ENCODE measurements at regions of chr5 and their contacts with region 1.

Region 1: GRCh38 chr5:74919487-74919886 is 53.3 kb upstream of the FAM169A start:
- DNase-seq: peak in 1 of 2 donors; percentile 71
- ATAC-seq: peak; percentile 69 to 90 (median 85)
- H3K4me3 ChIP-seq: no peak overlapping the region
- H3K4me3 Mint-ChIP-seq: no peak overlapping the region
- H3K27ac ChIP-seq: no peak overlapping the region
- H3K27ac Mint-ChIP-seq: no peak overlapping the region
- H3K4me1 ChIP-seq: no peaks in the 10 kb centered on the region
- H3K4me1 Mint-ChIP-seq: peaks cover 0 to 12% of the 10 kb centered on the region in 2 donors
- H3K27me3 ChIP-seq: no peaks in the 10 kb centered on the region
- H3K27me3 Mint-ChIP-seq: no peaks in the 10 kb centered on the region
- CTCF ChIP-seq: peak; percentile 83

Region 2: GRCh38 chr5:73902327-73903051 is 1017.0 kb before region 1 on chr5:
- intact Hi-C with region 1: loop called (anchors 10 kb)
- DNase-seq: peak in 1 of 2 donors; percentile 74
- ATAC-seq: peak in 2 of 3 donors; percentile 53 to 57
- H3K4me3 ChIP-seq: no peak overlapping the region
- H3K4me3 Mint-ChIP-seq: no peak overlapping the region
- H3K27ac ChIP-seq: no peak overlapping the region
- H3K27ac Mint-ChIP-seq: no peak overlapping the region
- H3K4me1 ChIP-seq: no peaks in the 10 kb centered on the region
- H3K4me1 Mint-ChIP-seq: no peaks in the 10 kb centered on the region
- H3K27me3 ChIP-seq: no peaks in the 10 kb centered on the region
- H3K27me3 Mint-ChIP-seq: peaks cover 0 to 3% of the 10 kb centered on the region in 2 donors
- CTCF ChIP-seq: peak; percentile 90

Region 3: DNA sequence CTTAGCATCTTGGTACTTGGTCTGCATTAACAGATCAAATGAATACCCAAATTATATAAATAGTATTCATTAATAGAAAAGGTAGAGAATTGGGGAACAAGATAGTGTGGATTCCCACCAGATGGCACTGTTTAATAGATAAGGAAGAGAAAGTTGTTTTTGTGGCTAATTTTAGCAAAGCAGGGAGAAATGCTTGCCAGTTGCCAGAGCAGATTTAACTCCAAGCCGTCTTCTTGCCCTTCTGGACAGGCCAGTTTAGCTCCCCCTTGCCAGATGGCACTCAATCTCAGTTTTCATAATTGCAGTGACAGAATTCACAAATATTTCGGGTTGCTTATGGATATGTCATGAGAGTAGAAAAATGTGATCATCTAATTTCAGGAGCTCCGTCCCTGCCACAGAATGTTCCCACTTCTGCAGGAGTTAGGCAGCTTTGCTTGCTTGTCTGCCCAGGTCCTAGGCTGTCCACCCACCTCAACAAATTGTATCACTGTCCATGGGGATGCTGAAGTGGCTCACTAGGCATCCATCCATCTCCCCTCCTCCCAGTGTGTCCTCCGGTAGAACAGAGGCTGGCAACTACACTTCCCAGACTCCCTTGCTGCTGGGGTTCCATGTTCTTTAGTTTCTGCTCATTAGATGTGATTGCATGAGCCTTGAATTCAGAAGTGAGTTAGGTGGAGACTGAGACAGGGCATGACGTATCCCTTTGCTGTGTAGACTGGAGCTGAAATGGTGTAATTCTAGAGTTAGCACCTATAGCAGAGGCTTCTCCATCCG is 246.3 kb before region 1 on chr5:
- intact Hi-C with region 1: loop called (anchors 5 kb)
- DNase-seq: peak in 1 of 2 donors; percentile 47
- ATAC-seq: no peak
- H3K4me3 ChIP-seq: no peak overlapping the region
- H3K4me3 Mint-ChIP-seq: no peak overlapping the region
- H3K27ac ChIP-seq: no peak overlapping the region
- H3K27ac Mint-ChIP-seq: no peak overlapping the region
- H3K4me1 ChIP-seq: no peaks in the 10 kb centered on the region
- H3K4me1 Mint-ChIP-seq: no peaks in the 10 kb centered on the region
- H3K27me3 ChIP-seq: no peaks in the 10 kb centered on the region
- H3K27me3 Mint-ChIP-seq: peaks cover 13 to 20% of the 10 kb centered on the region in 2 donors
- CTCF ChIP-seq: peak; percentile 26

Region 4: GRCh38 chr5:74877624-74878304 is 41.7 kb before region 1 on chr5:
- intact Hi-C with region 1: no loop called
- DNase-seq: no peak
- ATAC-seq: no peak
- H3K4me3 ChIP-seq: no peak overlapping the region
- H3K4me3 Mint-ChIP-seq: no peak overlapping the region
- H3K27ac ChIP-seq: no peak overlapping the region
- H3K27ac Mint-ChIP-seq: no peak overlapping the region
- H3K4me1 ChIP-seq: no peaks in the 10 kb centered on the region
- H3K4me1 Mint-ChIP-seq: no peaks in the 10 kb centered on the region
- H3K27me3 ChIP-seq: no peaks in the 10 kb centered on the region
- H3K27me3 Mint-ChIP-seq: peaks cover 0 to 2% of the 10 kb centered on the region in 2 donors
- CTCF ChIP-seq: no peak

Region 5: GRCh38 chr5:74966151-74967026 is 46.9 kb after region 1 on chr5:
- intact Hi-C with region 1: no loop called
- DNase-seq: no peak
- ATAC-seq: no peak
- H3K4me3 ChIP-seq: no peak overlapping the region
- H3K4me3 Mint-ChIP-seq: no peak overlapping the region
- H3K27ac ChIP-seq: no peak overlapping the region
- H3K27ac Mint-ChIP-seq: no peak overlapping the region
- H3K4me1 ChIP-seq: no peaks in the 10 kb centered on the region
- H3K4me1 Mint-ChIP-seq: no peaks in the 10 kb centered on the region
- H3K27me3 ChIP-seq: peaks cover 2% of the 10 kb centered on the region
- H3K27me3 Mint-ChIP-seq: peaks cover 18 to 36% of the 10 kb centered on the region in 2 donors
- CTCF ChIP-seq: no peak

Region 6: DNA sequence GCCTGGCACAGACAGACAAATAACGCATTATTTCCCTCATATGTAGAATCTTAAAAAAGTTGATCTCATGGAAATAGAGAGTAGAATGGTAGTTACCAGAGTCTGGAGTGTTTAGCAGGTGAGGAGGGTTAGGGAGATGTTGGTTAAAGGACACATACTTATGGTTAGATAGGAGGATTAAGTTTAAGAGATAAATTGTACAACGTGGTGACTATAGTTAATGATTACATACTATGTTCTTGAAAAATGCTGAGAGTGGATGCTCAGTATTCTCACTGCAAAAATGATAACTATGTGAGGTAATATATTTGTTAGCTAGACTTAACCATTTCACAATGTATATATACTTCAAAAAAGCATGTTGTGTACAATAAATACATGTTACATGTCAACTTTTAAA is 554.0 kb after region 1 on chr5:
- intact Hi-C with region 1: no loop called
- DNase-seq: no peak
- ATAC-seq: no peak
- H3K4me3 ChIP-seq: no peak overlapping the region
- H3K4me3 Mint-ChIP-seq: no peak overlapping the region
- H3K27ac ChIP-seq: no peak overlapping the region
- H3K27ac Mint-ChIP-seq: no peak overlapping the region
- H3K4me1 ChIP-seq: no peaks in the 10 kb centered on the region
- H3K4me1 Mint-ChIP-seq: peaks cover 24 to 49% of the 10 kb centered on the region in 2 donors
- H3K27me3 ChIP-seq: no peaks in the 10 kb centered on the region
- H3K27me3 Mint-ChIP-seq: no peaks in the 10 kb centered on the region
- CTCF ChIP-seq: no peak

Region 7: DNA sequence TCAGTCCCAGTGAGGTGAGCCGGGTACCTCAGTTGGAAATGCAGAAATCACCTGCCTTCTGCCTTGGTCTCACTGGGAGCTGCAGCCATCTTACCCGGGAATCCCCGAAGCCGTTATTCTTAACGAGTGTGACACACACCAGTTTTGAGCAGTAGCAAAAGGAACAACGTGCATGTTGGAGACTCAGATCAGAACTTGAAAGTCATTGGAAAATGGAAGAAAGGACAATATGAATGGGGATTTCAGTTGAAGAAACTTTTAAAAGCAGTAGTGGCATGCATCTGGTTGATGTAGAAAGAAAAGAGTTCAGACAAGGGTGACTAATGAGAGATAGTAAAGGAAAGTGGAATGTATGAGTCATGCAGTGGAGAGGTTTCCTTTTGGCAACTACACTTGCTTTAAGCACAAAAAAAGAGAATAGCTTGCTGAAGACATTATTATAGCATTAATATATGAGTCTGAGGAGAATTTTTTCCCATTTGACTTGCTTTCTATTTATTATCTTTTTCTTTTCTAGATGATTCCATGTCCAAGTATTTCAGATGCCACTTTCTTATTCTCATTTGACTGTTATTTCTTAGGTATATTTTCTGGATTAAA is 647.3 kb after region 1 on chr5:
- intact Hi-C with region 1: no loop called
- DNase-seq: peak; percentile 16 to 43
- ATAC-seq: peak; percentile 65 to 87 (median 66)
- H3K4me3 ChIP-seq: no peak overlapping the region
- H3K4me3 Mint-ChIP-seq: no peak overlapping the region
- H3K27ac ChIP-seq: no peak overlapping the region
- H3K27ac Mint-ChIP-seq: peak overlapping the region; percentile 37 to 83
- H3K4me1 ChIP-seq: peaks cover 5% of the 10 kb centered on the region
- H3K4me1 Mint-ChIP-seq: peaks cover 36 to 37% of the 10 kb centered on the region in 2 donors
- H3K27me3 ChIP-seq: no peaks in the 10 kb centered on the region
- H3K27me3 Mint-ChIP-seq: no peaks in the 10 kb centered on the region
- CTCF ChIP-seq: no peak